Kidney (tissue), 22 donors: ENCODE measurements at regions of chr12 and their contacts with region 1.

Region 1: DNA sequence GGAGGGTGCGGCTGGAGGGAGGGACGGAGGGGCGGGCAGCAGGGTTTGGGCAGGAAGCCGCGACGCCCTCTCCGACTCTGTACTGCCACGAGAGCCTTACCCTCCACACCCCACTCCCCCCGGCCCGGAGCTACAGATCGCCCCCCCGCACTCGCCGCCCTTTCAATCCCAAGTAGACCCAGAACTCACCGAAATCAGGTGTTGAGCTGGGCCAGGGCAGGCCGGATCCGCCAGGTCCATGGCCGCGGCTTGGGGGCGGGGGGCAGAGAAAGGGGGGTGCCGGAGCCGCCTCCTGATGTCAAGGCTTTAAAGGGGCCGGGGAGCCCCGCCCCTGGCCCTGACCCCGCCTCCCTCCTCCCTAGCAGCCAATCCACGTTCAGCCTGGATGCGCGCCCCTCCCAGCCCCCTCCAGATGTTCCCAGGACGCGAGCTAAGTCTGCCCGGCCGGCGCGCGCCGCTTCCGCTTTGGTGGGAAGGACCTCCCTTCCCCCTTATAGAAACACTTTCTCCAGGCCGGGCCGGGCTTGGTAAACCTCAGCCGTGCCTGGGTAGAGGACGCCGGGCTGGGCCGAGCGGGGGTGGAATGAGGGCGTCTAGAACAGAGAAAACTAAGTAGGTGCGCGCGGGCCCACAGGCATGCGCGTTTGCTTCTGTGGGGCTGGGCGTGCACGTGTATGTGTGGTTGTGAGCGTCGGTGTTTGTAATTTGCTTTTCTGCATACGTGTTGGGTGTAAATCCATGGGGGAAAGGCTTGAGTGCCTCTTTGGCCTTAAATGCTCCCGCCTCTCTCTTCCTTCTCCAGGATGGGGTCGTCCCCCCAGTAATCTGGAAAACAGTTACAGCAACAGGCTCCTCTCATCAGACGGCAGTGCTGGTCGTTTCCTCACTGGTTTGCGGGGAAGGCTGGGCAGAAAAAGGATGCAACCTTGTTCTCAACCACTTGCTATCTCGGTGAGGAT is at the start of gene NCKAP5L:
- DNase-seq: peak; percentile 98 to 99 (median 98)
- H3K4me3 ChIP-seq: peak within 1 kb of the TSS; percentile 74 to 77 (median 76)
- H3K27ac ChIP-seq: peak within 1 kb of the TSS; percentile 75 to 85
- H3K4me1 ChIP-seq: peaks cover 6 to 18% (median 8%) of the 10 kb centered on the region in 3 donors
- H3K27me3 ChIP-seq: no peaks in the 10 kb centered on the region
- CTCF ChIP-seq: no peak
- total RNA-seq, gene NCKAP5L: 20.6 TPM

Region 2: DNA sequence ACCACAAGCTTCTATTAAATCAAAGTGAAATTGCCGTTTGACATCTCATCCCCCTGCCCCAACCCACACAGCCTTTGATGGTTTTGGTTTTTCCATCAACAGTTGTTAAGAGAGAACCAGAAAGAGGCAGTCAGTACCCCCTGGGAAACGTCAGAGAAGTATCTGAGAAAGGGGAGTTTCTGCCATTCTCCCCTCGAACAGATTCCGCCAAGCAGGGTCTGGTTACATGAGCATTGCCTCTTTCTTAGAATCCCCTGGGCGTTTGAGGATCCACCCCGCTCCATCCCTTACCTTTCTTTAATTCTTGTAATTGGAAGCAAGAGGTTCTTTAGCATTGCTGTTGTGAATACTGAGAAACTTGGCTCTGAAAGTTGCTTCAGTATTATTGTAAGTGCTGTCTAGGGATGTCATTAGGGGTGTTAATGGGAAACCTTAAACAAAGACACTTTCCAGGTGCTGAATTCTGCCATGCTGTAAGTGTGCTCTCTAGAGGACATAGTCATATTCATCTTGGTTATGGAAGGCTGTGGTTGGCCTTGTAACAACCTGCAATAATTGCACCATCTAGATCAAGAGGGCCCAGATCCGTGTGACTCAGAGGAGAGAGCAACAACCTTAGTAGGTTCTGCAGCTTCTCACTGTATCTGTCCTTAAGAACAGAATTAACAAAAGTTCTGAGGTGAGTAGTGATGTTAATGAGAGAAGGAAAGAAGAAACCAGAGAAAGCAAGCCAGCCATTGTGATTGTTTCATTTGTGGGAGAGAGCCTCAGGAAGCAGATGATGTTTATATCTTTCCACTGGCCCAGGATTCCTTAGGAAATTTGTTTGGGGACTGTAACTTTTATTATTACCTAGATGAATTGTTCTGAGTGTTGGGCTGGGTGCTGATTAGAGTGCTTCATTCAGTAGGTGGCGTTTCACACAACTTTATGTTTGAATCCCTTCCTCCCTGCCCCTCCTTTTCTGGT is 78.1 kb before region 1 on chr12:
- intact Hi-C with region 1: loop called (anchors 10 kb)
- DNase-seq: peak in 1 of 5 donors; percentile 35
- H3K4me3 ChIP-seq: peak overlapping the region in 2 of 3 donors; percentile 1 to 14
- H3K27ac ChIP-seq: no peak overlapping the region
- H3K4me1 ChIP-seq: peaks cover 0 to 39% (median 19%) of the 10 kb centered on the region in 3 donors
- H3K27me3 ChIP-seq: no peaks in the 10 kb centered on the region
- CTCF ChIP-seq: no peak